Sciatic nerve (tissue), 2 donors: ENCODE measurements at regions of chr1 and their contacts with region 1.

Region 1: GRCh38 chr1:158654571-158654970 is 31.9 kb downstream of the SPTA1 start:
- DNase-seq: no peak
- ATAC-seq: peak; percentile 34

Region 2: DNA sequence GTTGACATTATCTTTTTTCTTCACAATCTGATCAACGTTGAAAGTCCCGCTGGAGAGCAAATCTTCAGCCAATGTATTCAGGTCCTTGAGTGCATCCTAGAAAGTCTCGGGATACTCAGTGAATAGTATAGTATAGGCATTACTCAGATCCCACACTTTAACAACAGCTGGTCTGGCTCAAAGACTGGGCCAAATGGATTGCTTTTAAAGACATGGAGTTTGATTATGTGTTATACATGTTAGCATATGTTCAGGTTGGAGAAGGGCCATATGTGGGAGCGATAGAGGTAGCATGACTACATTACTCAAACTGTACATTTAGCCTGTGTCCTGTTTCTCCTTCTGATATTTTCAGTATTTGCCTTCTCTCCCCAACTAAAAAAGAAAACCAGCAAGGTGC is 16.4 kb before region 1 on chr1:
- intact Hi-C with region 1: no loop called
- DNase-seq: no peak
- ATAC-seq: no peak

Region 3: GRCh38 chr1:158686111-158687009 is 31.8 kb after region 1 on chr1 and contains the start of gene SPTA1:
- intact Hi-C with region 1: loop called (anchors 2 kb)
- DNase-seq: no peak
- ATAC-seq: no peak
- total RNA-seq, gene SPTA1: 3.8 TPM